Panc1 (cell line): ENCODE measurements at regions of chr6 and their contacts with region 1.

Region 1: GRCh38 chr6:36196880-36197548 is 470 bp downstream of the BRPF3 start:
- DNase-seq: peak; percentile 51
- ATAC-seq: peak; percentile 96
- H3K4me3 ChIP-seq: peak overlapping the region; percentile 70 to 74
- H3K27ac ChIP-seq: peak overlapping the region; percentile 82
- H3K4me1 ChIP-seq: 0 out of 2 replicates have a peak, but pooled peaks cover 7% of the 10 kb centered on the region
- H3K27me3 ChIP-seq: no peaks in the 10 kb centered on the region
- CTCF ChIP-seq: no peak

Region 2: GRCh38 chr6:36123257-36124139 is 73.5 kb before region 1 on chr6:
- CTCF ChIA-PET with region 1: interaction called, 6 read pairs
- POLR2A ChIA-PET with region 1: no interaction called
- in situ Hi-C with region 1: no loop called
- intact Hi-C with region 1: loop called (anchors 5 kb)
- DNase-seq: peak; percentile 36
- ATAC-seq: peak; percentile 90
- H3K4me3 ChIP-seq: no peak overlapping the region
- H3K27ac ChIP-seq: no peak overlapping the region
- H3K4me1 ChIP-seq: peaks cover 8% of the 10 kb centered on the region
- H3K27me3 ChIP-seq: no peaks in the 10 kb centered on the region
- CTCF ChIP-seq: peak; percentile 83

Region 3: GRCh38 chr6:36285187-36285671 is 88.2 kb after region 1 on chr6:
- CTCF ChIA-PET with region 1: no interaction called
- POLR2A ChIA-PET with region 1: no interaction called
- in situ Hi-C with region 1: no loop called
- intact Hi-C with region 1: no loop called
- DNase-seq: no peak
- ATAC-seq: no peak
- H3K4me3 ChIP-seq: no peak overlapping the region
- H3K27ac ChIP-seq: no peak overlapping the region
- H3K4me1 ChIP-seq: no peaks in the 10 kb centered on the region
- H3K27me3 ChIP-seq: peaks cover 10% of the 10 kb centered on the region
- CTCF ChIP-seq: no peak